ENCODE measurements at regions of chr11 and their contacts with region 1.

Region 1: DNA sequence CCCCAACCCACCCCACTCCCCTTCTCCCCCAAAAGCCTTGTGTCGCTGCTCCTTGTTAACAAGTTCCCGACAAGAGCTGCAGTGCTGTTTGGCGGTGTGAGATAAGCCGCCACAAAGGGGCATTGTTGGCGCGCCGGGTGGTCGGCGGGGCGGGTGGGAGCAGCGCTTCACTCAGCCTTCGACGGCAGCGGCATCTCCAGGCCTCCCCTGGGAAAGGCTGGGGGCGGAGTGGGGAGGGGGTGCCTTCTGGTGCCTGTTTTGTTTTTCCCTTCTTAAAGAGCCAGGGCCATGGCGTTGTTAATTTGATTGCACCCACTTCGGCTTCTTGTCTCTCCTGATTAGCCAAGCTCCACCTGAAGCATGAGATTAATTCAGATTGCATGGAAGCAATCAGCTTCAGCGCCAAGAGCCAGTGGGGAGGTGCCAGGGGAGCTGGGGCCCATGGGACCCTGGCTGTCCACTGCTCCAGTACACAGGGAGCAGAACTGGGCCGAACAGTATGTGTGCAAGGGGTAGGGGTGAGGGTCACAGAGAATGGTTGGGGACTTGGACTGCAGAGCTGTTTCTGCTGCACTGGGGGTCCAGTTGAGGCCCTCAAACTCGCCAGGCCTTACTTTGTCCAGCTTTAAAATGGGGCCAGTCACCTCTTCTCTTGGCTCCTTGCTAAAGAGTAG is 165.1 kb downstream of the CEP164 start:
- DNase-seq: no peak
- ATAC-seq: no peak
- H3K4me3 ChIP-seq: no peak overlapping the region
- H3K4me3 Mint-ChIP-seq: no peak overlapping the region
- H3K27ac ChIP-seq: no peak overlapping the region
- H3K27ac Mint-ChIP-seq: no peak overlapping the region
- H3K4me1 ChIP-seq: no peaks in the 10 kb centered on the region
- H3K4me1 Mint-ChIP-seq: no peaks in the 10 kb centered on the region
- H3K27me3 ChIP-seq: no peaks in the 10 kb centered on the region
- H3K27me3 Mint-ChIP-seq: peaks cover 11% of the 10 kb centered on the region
- CTCF ChIP-seq: no peak

Region 2: GRCh38 chr11:117513666-117514065 is 21.0 kb after region 1 on chr11:
- CTCF ChIA-PET with region 1: no interaction called
- POLR2A ChIA-PET with region 1: no interaction called
- intact Hi-C with region 1: loop called in 1 of 2 experiments (anchors 1 kb)
- DNase-seq: no peak
- ATAC-seq: no peak
- H3K4me3 ChIP-seq: no peak overlapping the region
- H3K4me3 Mint-ChIP-seq: no peak overlapping the region
- H3K27ac ChIP-seq: no peak overlapping the region
- H3K27ac Mint-ChIP-seq: no peak overlapping the region
- H3K4me1 ChIP-seq: no peaks in the 10 kb centered on the region
- H3K4me1 Mint-ChIP-seq: no peaks in the 10 kb centered on the region
- H3K27me3 ChIP-seq: no peaks in the 10 kb centered on the region
- H3K27me3 Mint-ChIP-seq: peaks cover 3% of the 10 kb centered on the region
- CTCF ChIP-seq: no peak